ENCODE measurements at regions of chr17 and their contacts with region 1.

Region 1: DNA sequence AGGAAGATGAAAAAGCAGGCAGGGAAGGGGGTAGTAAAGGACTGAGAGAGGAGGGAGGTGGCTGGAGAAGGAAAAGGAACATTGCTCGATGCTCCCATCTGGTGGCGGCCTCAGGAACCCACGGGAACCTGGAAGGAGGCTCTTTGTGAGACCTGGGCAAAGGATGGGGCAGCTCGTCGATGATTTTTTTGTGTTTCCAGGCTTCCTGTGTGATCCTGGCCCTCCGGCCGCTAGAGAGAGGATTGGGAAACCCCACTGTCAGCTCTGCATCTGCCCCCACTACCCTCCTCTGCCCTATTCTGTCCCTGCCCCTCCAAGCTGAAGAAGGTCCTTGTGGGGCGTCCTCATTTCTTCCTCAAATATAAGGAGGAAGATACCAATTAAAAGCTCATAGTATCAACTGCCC is 6.6 kb downstream of the WFIKKN2 start:
- DNase-seq: peak; percentile 77 to 84 (median 83)
- ATAC-seq: peak; percentile 93
- H3K4me3 ChIP-seq: no peak overlapping the region
- H3K27ac ChIP-seq: no peak overlapping the region
- H3K4me1 ChIP-seq: peaks cover 0 to 13% of the 10 kb centered on the region in 2 experiments; a peak in 2 of 5 replicates
- H3K27me3 ChIP-seq: no peaks in the 10 kb centered on the region
- CTCF ChIP-seq: peak; percentile 84 to 90 (median 87)
- EP300 ChIP-seq: no peak
- POLR2A ChIP-seq: no peak
- RAD21 ChIP-seq: peak; percentile 85 to 94

Region 2: GRCh38 chr17:50816771-50817751 is 24.9 kb before region 1 on chr17:
- CTCF ChIA-PET with region 1: interaction called, 8 read pairs
- POLR2A ChIA-PET with region 1: no interaction called
- in situ Hi-C with region 1: no loop called
- intact Hi-C with region 1: loop called (anchors 2 kb)
- DNase-seq: peak; percentile 71 to 84 (median 80)
- ATAC-seq: peak; percentile 92
- H3K4me3 ChIP-seq: peak overlapping the region; percentile 20; the same call in 1 of the 2 replicates
- H3K27ac ChIP-seq: no peak overlapping the region
- H3K4me1 ChIP-seq: peaks cover 3 to 6% of the 10 kb centered on the region in 2 experiments; a peak in 3 of 5 replicates
- H3K27me3 ChIP-seq: no peaks in the 10 kb centered on the region; a peak in 1 of 5 replicates
- CTCF ChIP-seq: peak; percentile 72 to 94 (median 73)
- EP300 ChIP-seq: no peak
- POLR2A ChIP-seq: no peak
- RAD21 ChIP-seq: peak; percentile 34 to 69; a peak in 3 of 4 replicates

Region 3: GRCh38 chr17:50976951-50977472 is 135.1 kb after region 1 on chr17:
- CTCF ChIA-PET with region 1: no interaction called
- POLR2A ChIA-PET with region 1: no interaction called
- in situ Hi-C with region 1: no loop called
- intact Hi-C with region 1: no loop called
- DNase-seq: no peak
- ATAC-seq: no peak
- H3K4me3 ChIP-seq: no peak overlapping the region
- H3K27ac ChIP-seq: peak overlapping the region; percentile 2; the same call in 2 of the 3 replicates
- H3K4me1 ChIP-seq: peaks cover 0 to 28% of the 10 kb centered on the region in 2 experiments; a peak in 3 of 5 replicates
- H3K27me3 ChIP-seq: no peaks in the 10 kb centered on the region
- CTCF ChIP-seq: no peak
- EP300 ChIP-seq: no peak
- POLR2A ChIP-seq: no peak
- RAD21 ChIP-seq: no peak

Measured in K562 (cell line).